CD4-positive, alpha-beta memory T cell (primary cell): ENCODE measurements at regions of chr17 and their contacts with region 1.

Region 1: DNA sequence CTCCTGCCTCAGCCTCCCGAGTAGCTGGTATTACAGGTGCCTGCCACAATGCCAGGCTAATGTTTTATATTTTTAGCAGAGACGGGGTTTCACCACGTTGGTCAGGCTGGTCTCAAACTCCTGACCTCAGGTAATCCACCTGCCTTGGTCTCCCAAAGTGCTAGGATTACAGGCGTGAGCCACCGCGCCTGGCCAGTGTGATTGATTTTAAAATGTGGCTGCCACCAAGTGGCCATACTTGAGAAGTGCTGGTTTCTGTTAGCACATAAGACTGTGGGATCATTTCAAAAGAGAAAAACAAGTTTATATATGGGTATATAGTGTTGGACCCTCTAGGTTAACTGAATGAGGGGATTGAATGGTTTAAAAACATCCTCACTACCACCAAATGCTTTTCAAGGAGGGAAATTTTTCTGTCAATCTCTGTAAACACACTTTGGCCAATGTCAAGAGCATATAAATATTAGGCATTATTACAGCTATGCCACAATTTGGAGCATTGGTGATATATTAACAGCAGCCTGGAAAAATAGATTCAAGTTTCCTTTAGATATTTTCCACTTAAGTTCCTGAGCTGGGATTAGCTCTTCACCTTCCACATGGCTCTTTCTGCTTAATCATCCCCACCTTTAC is 13.5 kb upstream of the DHRS13 start:
- DNase-seq: peak; percentile 40 to 59 (median 45)
- H3K4me3 ChIP-seq: no peak overlapping the region
- H3K4me3 Mint-ChIP-seq: no peak overlapping the region
- H3K27ac ChIP-seq: no peak overlapping the region
- H3K27ac Mint-ChIP-seq: peak overlapping the region in 6 of 7 donors; percentile 70 to 91 (median 82)
- H3K4me1 ChIP-seq: no peaks in the 10 kb centered on the region
- H3K4me1 Mint-ChIP-seq: peaks cover 0 to 6% (median 4%) of the 10 kb centered on the region in 4 donors
- H3K27me3 ChIP-seq: no peaks in the 10 kb centered on the region
- H3K27me3 Mint-ChIP-seq: no peaks in the 10 kb centered on the region

Region 2: DNA sequence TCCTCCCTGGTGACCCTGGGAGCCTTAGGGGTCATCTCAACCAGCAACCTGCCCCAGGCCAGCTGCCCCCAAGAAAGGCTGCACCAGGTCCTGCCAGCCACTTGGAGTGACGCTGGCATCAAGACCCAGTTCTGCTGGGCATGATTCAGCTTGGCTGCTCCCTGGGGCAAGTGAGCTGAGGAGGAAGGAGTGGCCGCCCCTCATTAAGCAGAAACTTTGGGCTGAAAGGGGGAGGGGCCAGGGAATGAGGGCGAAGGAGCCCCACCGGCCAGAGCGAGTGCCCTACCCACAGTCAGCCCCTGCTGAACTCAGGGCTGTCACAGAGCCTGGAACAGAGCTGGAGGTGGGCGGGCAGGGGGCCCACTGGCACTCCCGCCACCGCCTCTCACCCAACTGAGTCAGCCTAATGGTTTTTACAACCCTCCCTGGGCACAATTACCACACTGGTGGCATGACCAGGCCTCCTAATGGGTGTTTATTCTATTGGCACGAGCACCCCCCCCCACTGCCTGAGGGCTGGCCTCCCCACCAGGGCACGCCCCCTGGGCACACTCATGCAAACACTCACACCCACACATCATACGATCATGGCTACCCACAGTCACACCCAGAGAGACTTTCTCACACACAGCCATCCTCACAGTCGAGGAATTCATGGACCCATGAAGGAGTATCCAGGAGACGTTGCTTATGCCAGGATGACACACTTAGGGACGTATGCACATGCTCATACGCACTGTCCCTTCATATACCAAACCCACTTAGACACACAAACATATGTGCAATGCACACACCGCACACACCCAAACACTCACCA is 383.2 kb before region 1 on chr17:
- CTCF ChIA-PET with region 1: no interaction called
- POLR2A ChIA-PET with region 1: no interaction called
- intact Hi-C with region 1: no loop called
- DNase-seq: no peak
- H3K4me3 ChIP-seq: no peak overlapping the region
- H3K4me3 Mint-ChIP-seq: no peak overlapping the region
- H3K27ac ChIP-seq: no peak overlapping the region
- H3K27ac Mint-ChIP-seq: no peak overlapping the region
- H3K4me1 ChIP-seq: no peaks in the 10 kb centered on the region
- H3K4me1 Mint-ChIP-seq: no peaks in the 10 kb centered on the region
- H3K27me3 ChIP-seq: no peaks in the 10 kb centered on the region
- H3K27me3 Mint-ChIP-seq: peaks cover 1 to 3% of the 10 kb centered on the region in 2 donors

Region 3: GRCh38 chr17:28849281-28849680 is 67.1 kb before region 1 on chr17:
- CTCF ChIA-PET with region 1: interaction called, 10 read pairs
- POLR2A ChIA-PET with region 1: no interaction called
- intact Hi-C with region 1: loop called (anchors 1 kb)
- DNase-seq: no peak
- H3K4me3 ChIP-seq: no peak overlapping the region
- H3K4me3 Mint-ChIP-seq: no peak overlapping the region
- H3K27ac ChIP-seq: no peak overlapping the region
- H3K27ac Mint-ChIP-seq: no peak overlapping the region
- H3K4me1 ChIP-seq: peaks cover 3% of the 10 kb centered on the region
- H3K4me1 Mint-ChIP-seq: peaks cover 0 to 3% (median under 1%) of the 10 kb centered on the region in 4 donors
- H3K27me3 ChIP-seq: no peaks in the 10 kb centered on the region
- H3K27me3 Mint-ChIP-seq: no peaks in the 10 kb centered on the region